Left cardiac atrium (tissue), 4 donors: ENCODE measurements at regions of chr2 and their contacts with region 1.

Region 1: DNA sequence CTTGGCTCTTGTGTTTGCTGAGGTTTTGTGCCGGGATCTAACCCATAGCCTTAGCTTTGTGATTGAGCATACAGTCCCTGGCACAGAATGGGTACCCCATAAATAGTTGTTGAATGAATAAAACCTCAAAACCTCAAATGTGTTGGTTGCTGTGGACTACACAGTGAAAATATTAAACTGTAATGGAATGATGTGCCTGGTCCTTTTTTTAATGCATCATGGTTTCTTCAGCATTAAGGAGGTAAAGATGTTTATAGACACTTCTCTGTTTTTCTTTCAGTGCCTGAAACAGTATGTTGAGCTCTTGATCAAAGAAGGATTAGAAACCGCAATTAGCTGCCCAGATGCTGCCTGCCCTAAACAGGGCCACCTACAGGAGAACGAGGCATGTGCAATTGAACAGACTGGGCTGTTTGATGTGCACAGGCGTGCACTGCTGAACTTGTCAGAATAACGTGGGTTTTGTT is 97.0 kb downstream of the RNF144A start:
- DNase-seq: no peak
- ATAC-seq: no peak

Region 2: DNA sequence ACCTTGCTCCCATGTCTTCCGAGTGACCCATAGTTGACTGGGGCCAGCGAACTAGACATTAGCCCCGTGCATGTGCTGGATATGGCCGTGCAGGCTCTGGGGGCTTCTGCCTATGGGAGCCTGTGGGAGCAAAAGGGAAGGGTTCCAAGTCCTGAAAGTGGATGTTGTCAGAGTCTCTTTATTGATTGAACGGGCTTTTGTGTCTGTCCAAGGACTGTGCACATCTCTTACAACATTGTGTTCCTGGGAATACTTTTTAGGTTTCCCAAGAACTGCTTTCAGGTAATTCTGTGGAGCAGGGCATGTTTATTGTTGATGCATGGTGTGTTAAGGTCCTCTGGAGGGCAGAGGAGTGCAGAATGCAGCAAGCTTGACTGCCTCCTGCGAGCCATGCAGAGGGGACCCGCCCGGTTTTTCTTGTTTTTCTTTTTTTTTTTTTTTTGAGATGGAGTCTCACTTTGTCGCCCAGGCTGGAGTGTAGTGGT is 92.0 kb before region 1 on chr2:
- intact Hi-C with region 1: loop called in 1 of 2 experiments (anchors 5 kb)
- DNase-seq: no peak
- ATAC-seq: no peak

Region 3: DNA sequence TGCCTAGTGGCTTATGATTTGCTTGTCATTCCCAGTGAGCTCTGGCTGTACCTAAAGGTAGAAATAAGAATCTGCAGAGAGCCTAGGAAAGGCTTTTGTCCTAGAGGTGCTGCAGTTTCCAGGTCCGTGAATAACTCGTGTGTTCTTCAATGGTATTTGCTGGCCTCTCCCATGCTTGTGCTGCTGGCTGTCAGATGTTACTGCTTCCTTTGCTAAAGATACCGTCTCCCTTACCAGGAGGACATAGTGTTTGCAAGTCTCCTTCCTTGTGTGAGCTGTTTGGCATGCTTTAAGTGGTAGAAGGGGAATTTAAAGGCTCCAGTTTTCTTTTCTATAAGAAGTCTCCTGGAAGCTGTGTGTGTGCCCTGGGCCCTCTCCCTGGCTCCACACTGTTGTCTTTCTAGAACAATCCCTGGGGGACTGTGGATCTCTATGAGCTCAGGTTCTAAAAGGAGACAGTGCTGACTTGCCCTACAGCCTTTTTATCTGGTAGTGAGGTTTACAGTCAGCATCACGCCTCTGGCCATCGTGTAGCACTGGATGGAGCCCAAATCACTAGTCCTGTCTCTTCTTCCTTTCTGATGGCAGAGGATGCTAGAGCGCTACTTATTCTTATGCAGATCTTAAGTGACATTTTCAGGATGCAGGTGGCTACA is 31.1 kb before region 1 on chr2:
- intact Hi-C with region 1: loop called in 1 of 2 experiments (anchors 5 kb)
- DNase-seq: no peak
- ATAC-seq: peak; percentile 41 to 52